ENCODE measurements at regions of chr11 and their contacts with region 1.

Region 1: DNA sequence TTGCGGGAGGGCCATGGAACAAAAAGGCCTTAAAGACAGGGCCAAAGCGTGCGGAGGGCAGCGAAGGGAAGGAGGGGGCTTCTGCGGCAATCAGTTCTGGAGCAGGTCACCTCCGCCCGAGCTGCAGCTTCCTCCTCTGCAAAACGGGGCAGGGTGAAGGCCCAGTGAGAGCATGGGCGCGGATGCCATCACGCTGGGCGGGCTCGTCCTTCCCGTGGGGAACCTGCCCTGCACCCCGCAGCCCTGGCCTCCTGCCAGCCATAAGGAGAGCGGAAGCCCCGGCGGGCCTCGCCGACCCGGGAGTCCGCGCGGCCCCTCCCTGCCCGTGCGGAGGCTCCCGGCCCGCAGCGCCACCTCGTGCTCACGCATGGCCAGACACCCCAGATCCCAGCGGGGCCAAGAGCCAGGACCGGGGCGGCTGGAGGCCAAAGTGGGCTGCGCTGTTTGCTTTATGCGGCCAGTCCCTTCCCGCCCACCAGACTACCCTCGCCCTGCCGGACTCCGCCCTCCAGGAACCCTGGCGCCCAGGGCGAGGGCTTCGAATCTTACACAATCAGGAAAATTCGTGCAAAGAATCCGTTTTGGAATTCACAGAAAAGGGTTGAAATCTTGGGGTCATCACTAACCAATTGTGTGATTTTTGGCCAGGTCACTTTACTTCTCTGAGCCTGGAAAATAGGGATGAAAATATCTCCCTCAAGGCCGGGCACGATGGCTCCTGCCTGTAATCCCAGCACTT is 16.1 kb downstream of the TSKU start:
- DNase-seq: peak in 1 of 2 experiments; percentile 89
- H3K4me3 ChIP-seq: no peak overlapping the region
- H3K27ac ChIP-seq: no peak overlapping the region
- H3K4me1 ChIP-seq: peaks cover 39% of the 10 kb centered on the region
- H3K27me3 ChIP-seq: no peaks in the 10 kb centered on the region
- CTCF ChIP-seq: peak; percentile 43

Region 2: DNA sequence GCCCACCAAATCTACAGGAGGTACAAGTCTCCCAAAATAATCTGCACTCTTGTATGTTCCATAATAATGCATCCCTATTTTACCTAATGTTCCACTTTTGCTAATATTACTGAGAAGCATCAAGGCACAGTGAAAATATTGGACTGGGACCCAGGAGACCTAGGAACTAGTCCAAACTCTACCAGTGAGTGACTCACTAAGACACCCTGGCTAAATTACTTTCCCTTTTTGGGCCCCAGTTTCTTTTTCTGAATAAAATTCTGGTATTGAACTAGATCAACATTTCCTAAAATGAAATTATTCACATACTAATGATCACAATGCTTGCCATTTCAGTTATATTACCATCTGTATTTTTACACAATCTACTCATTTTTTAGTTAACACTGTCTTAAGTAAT is 437.9 kb before region 1 on chr11:
- CTCF ChIA-PET with region 1: no interaction called
- POLR2A ChIA-PET with region 1: no interaction called
- intact Hi-C with region 1: no loop called
- DNase-seq: no peak
- H3K4me3 ChIP-seq: no peak overlapping the region
- H3K27ac ChIP-seq: no peak overlapping the region
- H3K4me1 ChIP-seq: no peaks in the 10 kb centered on the region
- H3K27me3 ChIP-seq: no peaks in the 10 kb centered on the region
- CTCF ChIP-seq: no peak

Region 3: GRCh38 chr11:76734456-76735420 is 64.5 kb before region 1 on chr11:
- CTCF ChIA-PET with region 1: interaction called, 6 read pairs
- POLR2A ChIA-PET with region 1: no interaction called
- intact Hi-C with region 1: loop called (anchors 1 kb)
- DNase-seq: no peak
- H3K4me3 ChIP-seq: no peak overlapping the region
- H3K27ac ChIP-seq: no peak overlapping the region
- H3K4me1 ChIP-seq: no peaks in the 10 kb centered on the region
- H3K27me3 ChIP-seq: no peaks in the 10 kb centered on the region
- CTCF ChIP-seq: no peak

Region 4: DNA sequence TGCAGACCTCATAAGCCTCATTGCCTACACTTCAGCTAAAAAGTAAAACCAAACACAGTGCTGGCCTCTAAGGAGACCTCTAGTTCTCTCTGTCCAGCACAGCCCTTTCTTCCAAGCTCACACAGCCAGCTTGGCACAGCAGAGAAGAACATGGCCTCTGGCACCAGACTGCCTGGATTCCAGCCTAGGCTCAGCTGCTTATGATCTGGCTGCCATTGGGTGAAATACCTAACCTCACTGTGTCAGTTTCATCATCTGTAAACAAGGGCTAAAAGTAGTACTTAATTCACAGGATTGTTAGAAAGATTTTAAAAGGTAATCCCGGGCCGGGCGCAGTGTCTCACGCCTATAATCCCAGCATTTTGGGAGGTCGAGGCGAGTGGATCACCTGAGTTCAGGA is 51.6 kb after region 1 on chr11:
- CTCF ChIA-PET with region 1: no interaction called
- POLR2A ChIA-PET with region 1: no interaction called
- intact Hi-C with region 1: no loop called
- DNase-seq: peak in 1 of 2 experiments; percentile 32
- H3K4me3 ChIP-seq: no peak overlapping the region
- H3K27ac ChIP-seq: no peak overlapping the region
- H3K4me1 ChIP-seq: no peaks in the 10 kb centered on the region
- H3K27me3 ChIP-seq: no peaks in the 10 kb centered on the region
- CTCF ChIP-seq: no peak